ENCODE measurements at regions of chr3 and their contacts with region 1.

Region 1: GRCh38 chr3:53493963-53494791 is at the start of gene CACNA1D:
- DNase-seq: peak in 2 of 3 donors; percentile 50 to 64
- ATAC-seq: peak; percentile 63 to 72 (median 67)
- H3K4me3 ChIP-seq: peak within 1 kb of the TSS; percentile 55 to 69 (median 56)
- H3K27ac ChIP-seq: no peak within 1 kb of the TSS
- H3K4me1 ChIP-seq: peaks cover 0 to 7% (median 2%) of the 10 kb centered on the region in 4 donors
- H3K27me3 ChIP-seq: no peaks in the 10 kb centered on the region
- CTCF ChIP-seq: no peak
- POLR2A ChIP-seq: peak; percentile 21
- total RNA-seq, gene CACNA1D: 5.5 to 12.7 (median 9.3) TPM

Region 2: GRCh38 chr3:53375019-53375418 is 119.2 kb before region 1 on chr3:
- intact Hi-C with region 1: loop called in 1 of 2 experiments (anchors 10 kb)
- DNase-seq: peak; percentile 81 to 84 (median 84)
- ATAC-seq: peak; percentile 100
- H3K4me3 ChIP-seq: no peak overlapping the region
- H3K27ac ChIP-seq: no peak overlapping the region
- H3K4me1 ChIP-seq: no peaks in the 10 kb centered on the region
- H3K27me3 ChIP-seq: no peaks in the 10 kb centered on the region
- CTCF ChIP-seq: peak; percentile 76 to 95 (median 88)
- POLR2A ChIP-seq: no peak

Measured in right lobe of liver (tissue), 6 donors.